Activated B cell treated with CpG ODN at 0.5 μM for 24 hours (primary cell): ENCODE measurements at regions of chr12 and their contacts with region 1.

Region 1: DNA sequence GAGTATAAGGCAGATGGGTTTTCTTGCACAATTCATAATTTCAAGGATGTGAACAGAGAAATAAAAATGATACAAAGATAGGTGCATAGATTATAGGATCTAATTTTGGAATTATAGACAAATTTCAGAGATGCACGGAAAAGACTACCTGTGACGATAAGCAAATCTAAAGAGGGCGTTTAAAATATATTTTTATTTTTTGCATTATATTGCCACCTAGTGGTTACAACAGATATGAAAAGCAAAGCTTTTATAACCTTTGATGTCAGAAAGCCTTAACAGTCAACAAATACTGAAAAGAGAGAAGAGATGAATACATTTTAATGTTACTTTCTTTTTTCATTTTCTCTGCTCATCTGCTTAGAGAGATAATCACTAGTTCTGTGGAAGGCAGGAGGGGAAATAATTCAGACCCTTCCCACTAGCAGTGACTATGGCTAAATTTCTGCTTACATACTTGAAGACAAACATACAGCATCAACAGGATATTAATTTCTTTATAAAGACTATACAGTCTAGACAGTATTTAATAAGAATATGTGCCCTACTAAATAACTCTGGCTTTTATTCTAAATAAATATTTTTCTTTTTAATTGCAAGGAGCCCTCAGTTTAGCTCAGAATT is 46.3 kb downstream of the NTS start:
- DNase-seq: no peak
- ATAC-seq: no peak
- H3K4me3 Mint-ChIP-seq: no peak overlapping the region
- H3K27ac Mint-ChIP-seq: no peak overlapping the region
- H3K4me1 Mint-ChIP-seq: no peaks in the 10 kb centered on the region
- H3K27me3 Mint-ChIP-seq: no peaks in the 10 kb centered on the region
- CTCF ChIP-seq: peak; percentile 84

Region 2: DNA sequence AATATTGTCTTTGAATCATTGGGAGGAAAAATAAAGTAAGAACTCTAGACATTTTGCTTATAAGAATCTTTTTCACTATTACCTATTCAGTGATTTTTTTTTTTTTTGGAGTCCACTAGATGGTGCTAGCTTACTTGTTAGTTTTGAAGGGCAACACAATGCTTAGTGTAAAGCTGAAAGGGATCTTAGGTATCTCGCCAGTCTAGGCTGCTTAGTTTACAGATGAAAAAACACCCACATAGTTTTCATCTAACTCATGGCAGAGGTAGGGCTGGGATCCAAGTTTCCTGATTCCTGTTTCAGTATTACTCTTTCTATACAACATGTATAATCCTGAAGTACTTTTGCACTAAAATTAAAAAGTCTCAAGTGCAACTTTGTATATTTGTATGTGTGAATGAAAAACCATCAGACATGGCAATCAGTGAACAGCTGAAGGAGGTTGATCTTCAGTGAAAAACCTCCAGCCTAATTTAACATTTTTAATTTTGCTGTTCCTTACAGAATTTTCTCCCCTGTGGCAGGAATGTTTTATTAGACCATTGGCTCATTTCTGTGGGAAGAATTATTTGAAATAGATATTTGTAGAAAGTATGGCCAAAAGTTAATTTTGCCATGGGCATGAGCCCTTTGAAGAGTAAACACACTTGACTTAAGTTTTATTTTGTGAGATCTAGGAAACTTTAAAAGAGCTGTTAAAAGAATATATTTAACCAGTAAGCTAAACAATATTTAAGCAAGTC is 843.6 kb before region 1 on chr12:
- CTCF ChIA-PET with region 1: no interaction called
- POLR2A ChIA-PET with region 1: no interaction called
- intact Hi-C with region 1: loop called (anchors 5 kb)
- DNase-seq: no peak
- ATAC-seq: no peak
- H3K4me3 Mint-ChIP-seq: no peak overlapping the region
- H3K27ac Mint-ChIP-seq: no peak overlapping the region
- H3K4me1 Mint-ChIP-seq: no peaks in the 10 kb centered on the region
- H3K27me3 Mint-ChIP-seq: peaks cover 2% of the 10 kb centered on the region
- CTCF ChIP-seq: no peak

Region 3: DNA sequence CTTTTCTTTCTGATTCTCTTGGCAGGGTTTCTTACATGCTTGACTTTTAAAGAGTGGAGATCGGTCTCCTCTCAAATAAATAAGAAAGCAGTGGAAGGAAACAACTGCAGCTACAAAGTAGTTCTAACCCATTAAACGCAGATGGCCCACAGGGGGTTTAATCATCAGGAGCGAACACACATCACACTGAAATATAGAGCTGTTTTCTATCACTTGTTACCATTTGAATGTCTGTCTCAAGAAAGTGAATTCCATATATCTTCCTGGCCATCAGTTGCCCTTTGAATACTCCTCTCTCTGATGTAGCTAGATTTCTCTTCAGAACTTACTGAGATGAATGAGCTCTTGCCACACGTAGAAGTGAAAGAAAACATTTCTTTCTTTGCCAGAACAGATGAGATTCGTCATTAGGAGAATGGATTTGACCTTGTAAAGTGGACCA is 611.3 kb before region 1 on chr12:
- CTCF ChIA-PET with region 1: interaction called, 3 read pairs
- POLR2A ChIA-PET with region 1: no interaction called
- intact Hi-C with region 1: loop called (anchors 5 kb)
- DNase-seq: no peak
- ATAC-seq: no peak
- H3K4me3 Mint-ChIP-seq: no peak overlapping the region
- H3K27ac Mint-ChIP-seq: no peak overlapping the region
- H3K4me1 Mint-ChIP-seq: no peaks in the 10 kb centered on the region
- H3K27me3 Mint-ChIP-seq: no peaks in the 10 kb centered on the region
- CTCF ChIP-seq: no peak

Region 4: GRCh38 chr12:85468356-85469157 is 451.9 kb before region 1 on chr12:
- CTCF ChIA-PET with region 1: interaction called, 4 read pairs
- POLR2A ChIA-PET with region 1: no interaction called
- intact Hi-C with region 1: loop called (anchors 1 kb)
- DNase-seq: no peak
- ATAC-seq: peak; percentile 42
- H3K4me3 Mint-ChIP-seq: peak overlapping the region; percentile 84
- H3K27ac Mint-ChIP-seq: no peak overlapping the region
- H3K4me1 Mint-ChIP-seq: peaks cover 14% of the 10 kb centered on the region
- H3K27me3 Mint-ChIP-seq: peaks cover 3% of the 10 kb centered on the region
- CTCF ChIP-seq: no peak

Region 5: GRCh38 chr12:85575120-85576096 is 345.0 kb before region 1 on chr12:
- CTCF ChIA-PET with region 1: no interaction called
- POLR2A ChIA-PET with region 1: no interaction called
- intact Hi-C with region 1: loop called (anchors 1 kb)
- DNase-seq: no peak
- ATAC-seq: peak; percentile 31
- H3K4me3 Mint-ChIP-seq: no peak overlapping the region
- H3K27ac Mint-ChIP-seq: no peak overlapping the region
- H3K4me1 Mint-ChIP-seq: no peaks in the 10 kb centered on the region
- H3K27me3 Mint-ChIP-seq: no peaks in the 10 kb centered on the region
- CTCF ChIP-seq: no peak

Region 6: DNA sequence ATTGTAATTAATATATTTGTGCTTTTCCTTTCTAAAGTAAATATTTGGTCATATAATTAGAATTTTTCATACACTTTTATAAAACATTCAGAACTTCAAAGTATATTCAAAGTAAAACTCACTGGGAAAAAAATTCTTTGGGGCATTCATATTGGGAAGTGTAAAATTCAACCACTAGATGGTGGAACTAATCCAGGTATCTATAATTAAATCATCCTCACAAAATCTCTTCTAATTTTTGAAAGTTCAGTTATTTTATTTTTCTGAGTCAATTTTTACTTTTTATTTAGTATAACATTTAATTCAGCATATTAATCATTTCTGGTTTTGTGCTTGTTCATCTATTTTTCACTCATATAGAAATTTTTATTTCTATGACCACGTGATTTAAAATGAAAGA is 34.7 kb after region 1 on chr12:
- CTCF ChIA-PET with region 1: no interaction called
- POLR2A ChIA-PET with region 1: no interaction called
- intact Hi-C with region 1: no loop called
- DNase-seq: no peak
- ATAC-seq: no peak
- H3K4me3 Mint-ChIP-seq: no peak overlapping the region
- H3K27ac Mint-ChIP-seq: no peak overlapping the region
- H3K4me1 Mint-ChIP-seq: no peaks in the 10 kb centered on the region
- H3K27me3 Mint-ChIP-seq: no peaks in the 10 kb centered on the region
- CTCF ChIP-seq: no peak

Region 7: DNA sequence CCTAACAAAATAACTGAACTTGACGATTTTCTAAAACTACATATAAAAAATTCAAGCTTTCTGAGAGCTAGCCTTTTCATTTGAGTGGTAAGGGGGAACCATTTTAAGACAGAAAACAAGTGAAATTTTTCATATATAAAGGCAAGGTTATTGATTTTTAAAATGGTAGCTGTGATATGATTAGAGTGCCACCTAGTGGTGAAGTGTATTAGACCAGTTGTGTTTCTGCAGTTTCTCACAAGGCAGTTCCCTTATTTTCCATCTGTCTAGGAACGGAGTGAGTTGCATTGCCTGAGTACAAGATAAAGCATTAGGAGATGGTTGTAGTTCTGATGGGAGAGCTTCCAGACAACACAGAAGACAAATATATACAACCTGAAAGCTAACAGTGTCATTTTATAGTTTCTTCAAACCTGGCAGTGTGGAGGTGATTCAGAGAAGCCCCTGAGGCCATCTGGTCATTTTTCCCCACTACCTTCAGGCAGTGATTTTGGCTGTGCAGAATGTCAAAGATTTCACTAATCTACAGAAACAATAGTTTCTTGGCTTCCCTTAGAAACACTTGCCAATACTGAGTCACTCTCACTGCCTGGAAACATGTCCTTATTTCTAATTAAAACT is 1927.9 kb after region 1 on chr12:
- CTCF ChIA-PET with region 1: interaction called, 5 read pairs
- POLR2A ChIA-PET with region 1: no interaction called
- intact Hi-C with region 1: loop called (anchors 1 kb)
- DNase-seq: no peak
- ATAC-seq: peak; percentile 40
- H3K4me3 Mint-ChIP-seq: no peak overlapping the region
- H3K27ac Mint-ChIP-seq: no peak overlapping the region
- H3K4me1 Mint-ChIP-seq: peaks cover 1% of the 10 kb centered on the region
- H3K27me3 Mint-ChIP-seq: peaks cover 2% of the 10 kb centered on the region
- CTCF ChIP-seq: peak; percentile 91